ENCODE measurements at regions of chrX and their contacts with region 1.

Region 1: GRCh38 chrX:111100186-111100980 is 4.4 kb downstream of the PAK3 start:
- DNase-seq: peak in 1 of 6 donors; percentile 42
- ATAC-seq: peak in 3 of 4 donors; percentile 22 to 31 (median 29)
- H3K4me3 ChIP-seq: no peak overlapping the region
- H3K27ac ChIP-seq: no peak overlapping the region
- H3K4me1 ChIP-seq: no peaks in the 10 kb centered on the region
- H3K27me3 ChIP-seq: peaks cover 0 to 5% (median 0%) of the 10 kb centered on the region in 4 donors
- CTCF ChIP-seq: peak in 3 of 4 donors; percentile 28 to 45 (median 44)

Region 2: DNA sequence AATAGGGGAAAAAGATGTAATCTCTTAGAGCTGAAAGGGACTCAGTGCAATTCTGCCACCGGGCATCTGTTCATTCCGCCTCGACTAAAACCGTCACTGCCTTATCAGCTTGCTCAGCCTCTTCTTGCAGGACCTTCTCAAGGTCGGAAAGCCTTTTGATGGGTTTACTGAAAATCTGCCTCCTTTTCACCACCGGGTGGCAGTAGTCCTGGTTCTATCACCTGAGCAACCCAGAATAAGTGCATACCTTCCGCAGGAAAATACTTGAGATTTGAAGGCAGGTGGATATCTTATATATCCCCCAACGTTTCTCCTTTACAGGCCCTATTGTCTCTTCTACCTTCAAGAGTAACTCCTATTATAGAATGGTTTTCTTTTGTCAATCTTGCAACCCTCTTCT is 107.8 kb before region 1 on chrX:
- intact Hi-C with region 1: loop called in 1 of 3 experiments (anchors 5 kb)
- DNase-seq: peak in 3 of 6 donors; percentile 13 to 51 (median 21)
- ATAC-seq: peak; percentile 71 to 88 (median 78)
- H3K4me3 ChIP-seq: no peak overlapping the region
- H3K27ac ChIP-seq: no peak overlapping the region
- H3K4me1 ChIP-seq: no peaks in the 10 kb centered on the region
- H3K27me3 ChIP-seq: peaks cover 0 to 6% (median 2%) of the 10 kb centered on the region in 4 donors
- CTCF ChIP-seq: peak; percentile 19 to 51 (median 39)

Region 3: GRCh38 chrX:111006116-111006515 is 94.3 kb before region 1 on chrX:
- intact Hi-C with region 1: loop called in 1 of 3 experiments (anchors 10 kb)
- DNase-seq: no peak
- ATAC-seq: no peak
- H3K4me3 ChIP-seq: no peak overlapping the region
- H3K27ac ChIP-seq: no peak overlapping the region
- H3K4me1 ChIP-seq: no peaks in the 10 kb centered on the region
- H3K27me3 ChIP-seq: no peaks in the 10 kb centered on the region
- CTCF ChIP-seq: no peak

Measured in pancreas (tissue), 10 donors.